Transverse colon (tissue), 4 donors: ENCODE measurements at regions of chr21 and their contacts with region 1.

Region 1: GRCh38 chr21:36149788-36150711 is 6.6 kb upstream of the DOP1B start:
- DNase-seq: no peak
- H3K4me3 ChIP-seq: no peak overlapping the region
- H3K27ac ChIP-seq: peak overlapping the region; percentile 46 to 79 (median 63)
- H3K4me1 ChIP-seq: peaks cover 9 to 15% (median 12%) of the 10 kb centered on the region in 4 donors
- H3K27me3 ChIP-seq: no peaks in the 10 kb centered on the region
- CTCF ChIP-seq: no peak
- EP300 ChIP-seq: no peak
- POLR2A ChIP-seq: peak; percentile 24

Region 2: DNA sequence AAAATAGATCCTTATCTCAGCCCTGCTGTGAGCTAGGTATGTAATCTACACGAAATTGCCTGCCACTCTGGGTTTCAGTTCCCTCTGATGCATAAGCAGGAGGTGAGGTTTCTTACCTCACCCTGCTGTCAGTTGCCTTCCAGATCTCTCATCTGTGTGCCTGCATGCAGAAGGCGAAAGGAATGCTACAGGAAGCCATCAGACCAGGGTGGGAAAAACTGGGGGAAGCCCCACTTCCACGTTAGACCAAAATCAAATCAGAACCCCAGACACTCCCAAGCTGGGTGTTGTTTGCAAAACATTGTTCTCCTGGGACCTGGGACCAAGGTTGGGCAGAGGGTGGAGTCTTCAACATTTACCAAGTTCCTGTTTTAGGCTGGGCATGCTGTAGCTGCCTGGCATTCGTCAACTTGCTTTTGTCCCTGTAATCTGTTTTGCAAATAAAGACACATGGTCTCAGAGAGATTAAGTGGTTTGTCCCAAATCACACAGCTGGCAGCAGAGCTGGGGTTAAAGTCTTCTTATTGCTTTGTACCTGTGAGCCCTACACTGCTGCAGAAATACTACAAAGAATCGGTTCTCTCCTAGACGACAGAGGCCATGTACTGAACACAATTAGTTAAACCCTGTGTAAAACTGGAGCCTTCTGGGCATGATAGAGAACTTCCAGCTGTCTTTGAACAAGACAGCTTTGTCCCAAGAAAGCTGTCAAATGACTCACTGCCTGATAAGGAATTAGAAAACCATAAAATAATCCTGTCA is 711.2 kb before region 1 on chr21:
- in situ Hi-C with region 1: no loop called
- intact Hi-C with region 1: no loop called
- DNase-seq: peak; percentile 35
- H3K4me3 ChIP-seq: no peak overlapping the region
- H3K27ac ChIP-seq: peak overlapping the region; percentile 5 to 41 (median 34)
- H3K4me1 ChIP-seq: peaks cover 0 to 15% (median 2%) of the 10 kb centered on the region in 4 donors
- H3K27me3 ChIP-seq: no peaks in the 10 kb centered on the region
- CTCF ChIP-seq: no peak
- EP300 ChIP-seq: no peak
- POLR2A ChIP-seq: no peak

Region 3: DNA sequence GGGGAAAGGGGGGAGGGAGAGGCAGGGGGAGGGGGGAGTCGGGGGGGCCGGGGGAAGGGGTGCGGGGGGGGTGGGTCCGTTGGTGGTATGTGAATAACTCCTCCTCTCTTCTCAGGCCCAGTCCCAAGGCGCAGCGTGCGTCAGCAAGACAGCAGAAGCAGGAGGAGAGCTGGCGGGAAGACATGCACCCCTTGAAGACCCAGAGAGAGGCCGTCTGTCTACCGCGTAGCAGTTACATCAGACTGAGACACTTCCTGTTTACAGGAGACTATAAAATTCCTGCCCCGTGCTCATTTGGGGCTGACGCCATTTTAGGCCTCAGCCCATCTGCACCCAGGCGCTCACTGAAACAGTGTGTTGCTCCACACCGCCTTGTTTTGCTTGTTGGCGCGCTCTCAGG is 145.0 kb before region 1 on chr21:
- in situ Hi-C with region 1: no loop called
- intact Hi-C with region 1: no loop called
- DNase-seq: peak; percentile 51
- H3K4me3 ChIP-seq: no peak overlapping the region
- H3K27ac ChIP-seq: peak overlapping the region in 2 of 4 donors; percentile 63 to 64
- H3K4me1 ChIP-seq: no peaks in the 10 kb centered on the region
- H3K27me3 ChIP-seq: no peaks in the 10 kb centered on the region
- CTCF ChIP-seq: no peak
- EP300 ChIP-seq: no peak
- POLR2A ChIP-seq: no peak

Region 4: GRCh38 chr21:36209626-36210171 is 59.6 kb after region 1 on chr21:
- in situ Hi-C with region 1: loop called in 2 of 4 experiments (anchors 5 to 10 kb)
- intact Hi-C with region 1: no loop called
- DNase-seq: peak; percentile 67
- H3K4me3 ChIP-seq: no peak overlapping the region
- H3K27ac ChIP-seq: no peak overlapping the region
- H3K4me1 ChIP-seq: no peaks in the 10 kb centered on the region
- H3K27me3 ChIP-seq: no peaks in the 10 kb centered on the region
- CTCF ChIP-seq: peak; percentile 36 to 83 (median 56)
- EP300 ChIP-seq: no peak
- POLR2A ChIP-seq: no peak

Region 5: DNA sequence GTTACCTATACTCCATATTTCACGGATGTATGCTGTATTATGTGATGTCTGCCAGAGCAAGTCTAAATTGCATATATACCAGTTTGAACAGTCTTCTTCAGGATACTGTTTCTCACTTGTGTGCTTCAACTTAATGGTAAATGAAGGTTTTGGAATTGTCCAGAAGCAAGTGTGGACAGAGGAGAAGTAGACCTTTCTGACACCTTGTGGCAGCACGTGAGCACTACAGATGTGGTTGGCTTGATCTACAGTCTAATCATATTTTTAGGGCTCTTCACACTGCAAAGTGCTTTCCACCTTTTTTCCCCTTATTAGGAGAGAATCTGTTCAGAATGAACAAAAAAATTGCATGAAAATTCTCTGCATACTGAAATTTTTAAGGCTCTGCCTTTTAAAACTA is 180.9 kb after region 1 on chr21:
- in situ Hi-C with region 1: loop called (anchors 5 to 25 kb)
- intact Hi-C with region 1: loop called (anchors 10 kb)
- DNase-seq: peak; percentile 63
- H3K4me3 ChIP-seq: no peak overlapping the region
- H3K27ac ChIP-seq: peak overlapping the region in 2 of 4 donors; percentile 1 to 5
- H3K4me1 ChIP-seq: peaks cover 8 to 53% (median 16%) of the 10 kb centered on the region in 4 donors
- H3K27me3 ChIP-seq: no peaks in the 10 kb centered on the region
- CTCF ChIP-seq: peak; percentile 68 to 81 (median 80)
- EP300 ChIP-seq: no peak
- POLR2A ChIP-seq: no peak